ENCODE measurements at regions of chr21 and their contacts with region 1.

Region 1: DNA sequence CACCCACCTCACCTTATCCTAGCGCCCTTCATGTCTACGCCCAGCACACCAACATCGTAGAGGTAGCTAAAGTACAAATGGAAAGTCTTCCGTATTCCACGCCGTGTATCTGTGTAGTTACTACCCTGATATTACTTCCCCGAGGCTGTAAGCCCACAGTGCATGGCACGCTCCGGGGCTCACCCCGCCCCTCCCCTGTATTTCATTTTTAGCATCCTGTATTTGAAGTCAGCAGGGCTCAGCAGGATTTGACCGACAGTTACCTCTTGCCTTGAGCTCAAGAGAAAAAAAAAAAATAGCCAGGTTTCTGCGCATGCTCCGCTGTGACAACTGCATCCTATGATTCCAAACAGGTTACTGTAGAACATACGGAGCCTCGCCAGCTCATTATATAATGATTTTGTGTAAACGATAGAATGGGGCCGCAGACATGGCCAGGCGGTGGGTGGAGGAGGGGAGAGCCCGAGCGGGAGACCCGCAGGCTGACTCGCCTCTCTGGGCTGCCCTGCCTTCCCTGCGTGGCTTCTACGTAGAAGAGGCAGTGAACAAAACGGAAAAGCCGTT is 1.3 kb downstream of the ABCG1 start:
- DNase-seq: peak; percentile 93 to 95 (median 94)
- H3K4me3 ChIP-seq: peak overlapping the region; percentile 61 to 81 (median 75)
- H3K4me3 Mint-ChIP-seq: peak overlapping the region; percentile 95 to 98
- H3K27ac ChIP-seq: peak overlapping the region; percentile 85 to 89
- H3K27ac Mint-ChIP-seq: peak overlapping the region; percentile 84 to 97 (median 93)
- H3K4me1 ChIP-seq: peaks cover 33 to 37% of the 10 kb centered on the region in 2 donors
- H3K4me1 Mint-ChIP-seq: peaks cover 31% of the 10 kb centered on the region
- H3K27me3 ChIP-seq: peaks cover 6 to 8% of the 10 kb centered on the region in 2 donors
- H3K27me3 Mint-ChIP-seq: peaks cover 10 to 20% (median 14%) of the 10 kb centered on the region in 3 donors
- CTCF ChIP-seq: no peak

Region 2: GRCh38 chr21:42164064-42164789 is 56.0 kb before region 1 on chr21:
- intact Hi-C with region 1: loop called in 1 of 2 experiments (anchors 5 kb)
- DNase-seq: peak; percentile 64 to 71 (median 67)
- H3K4me3 ChIP-seq: no peak overlapping the region
- H3K4me3 Mint-ChIP-seq: peak overlapping the region in 1 of 2 donors; percentile 48
- H3K27ac ChIP-seq: no peak overlapping the region
- H3K27ac Mint-ChIP-seq: peak overlapping the region in 2 of 7 donors; percentile 60 to 80
- H3K4me1 ChIP-seq: no peaks in the 10 kb centered on the region
- H3K4me1 Mint-ChIP-seq: peaks cover 12% of the 10 kb centered on the region
- H3K27me3 ChIP-seq: peaks cover 0 to 6% of the 10 kb centered on the region in 2 donors
- H3K27me3 Mint-ChIP-seq: peaks cover 5 to 11% (median 8%) of the 10 kb centered on the region in 3 donors
- CTCF ChIP-seq: peak; percentile 73

Region 3: GRCh38 chr21:42199488-42200458 is 20.4 kb before region 1 on chr21:
- intact Hi-C with region 1: loop called in 1 of 2 experiments (anchors 2 kb)
- DNase-seq: peak; percentile 89 to 98 (median 96)
- H3K4me3 ChIP-seq: peak overlapping the region in 1 of 3 experiments; percentile 54
- H3K4me3 Mint-ChIP-seq: peak overlapping the region in 1 of 2 donors; percentile 73
- H3K27ac ChIP-seq: peak overlapping the region in 1 of 2 donors; percentile 90
- H3K27ac Mint-ChIP-seq: peak overlapping the region; percentile 81 to 96 (median 94)
- H3K4me1 ChIP-seq: peaks cover 37 to 46% of the 10 kb centered on the region in 2 donors
- H3K4me1 Mint-ChIP-seq: peaks cover 55% of the 10 kb centered on the region
- H3K27me3 ChIP-seq: no peaks in the 10 kb centered on the region
- H3K27me3 Mint-ChIP-seq: peaks cover 0 to 1% (median 0%) of the 10 kb centered on the region in 3 donors
- CTCF ChIP-seq: no peak

Region 4: GRCh38 chr21:42233067-42233961 is 13.1 kb after region 1 on chr21:
- intact Hi-C with region 1: loop called in 1 of 2 experiments (anchors 2 kb)
- DNase-seq: peak; percentile 91 to 92 (median 92)
- H3K4me3 ChIP-seq: peak overlapping the region in 1 of 3 experiments; percentile 74
- H3K4me3 Mint-ChIP-seq: peak overlapping the region; percentile 64 to 81
- H3K27ac ChIP-seq: peak overlapping the region; percentile 92 to 94
- H3K27ac Mint-ChIP-seq: peak overlapping the region; percentile 95 to 98 (median 97)
- H3K4me1 ChIP-seq: peaks cover 69 to 82% of the 10 kb centered on the region in 2 donors
- H3K4me1 Mint-ChIP-seq: peaks cover 86% of the 10 kb centered on the region
- H3K27me3 ChIP-seq: no peaks in the 10 kb centered on the region
- H3K27me3 Mint-ChIP-seq: peaks cover 1 to 10% (median 6%) of the 10 kb centered on the region in 3 donors
- CTCF ChIP-seq: peak; percentile 58

Region 5: GRCh38 chr21:42258153-42258884 is 38.1 kb after region 1 on chr21:
- intact Hi-C with region 1: loop called in 1 of 2 experiments (anchors 5 kb)
- DNase-seq: peak; percentile 71 to 84 (median 78)
- H3K4me3 ChIP-seq: no peak overlapping the region
- H3K4me3 Mint-ChIP-seq: peak overlapping the region in 1 of 2 donors; percentile 2
- H3K27ac ChIP-seq: no peak overlapping the region
- H3K27ac Mint-ChIP-seq: peak overlapping the region in 1 of 7 donors; percentile 33
- H3K4me1 ChIP-seq: peaks cover 16 to 24% of the 10 kb centered on the region in 2 donors
- H3K4me1 Mint-ChIP-seq: peaks cover 36% of the 10 kb centered on the region
- H3K27me3 ChIP-seq: no peaks in the 10 kb centered on the region
- H3K27me3 Mint-ChIP-seq: peaks cover 0 to 9% (median 5%) of the 10 kb centered on the region in 3 donors
- CTCF ChIP-seq: peak; percentile 95